B cell (primary cell): ENCODE measurements at regions of chr2 and their contacts with region 1.

Region 1: GRCh38 chr2:172710584-172711024 is 25.0 kb upstream of the RAPGEF4 start:
- DNase-seq: peak; percentile 23
- ATAC-seq: no peak
- H3K4me3 ChIP-seq: no peak overlapping the region
- H3K4me3 Mint-ChIP-seq: no peak overlapping the region
- H3K27ac ChIP-seq: no peak overlapping the region
- H3K27ac Mint-ChIP-seq: no peak overlapping the region
- H3K4me1 ChIP-seq: no peaks in the 10 kb centered on the region
- H3K4me1 Mint-ChIP-seq: no peaks in the 10 kb centered on the region
- H3K27me3 ChIP-seq: no peaks in the 10 kb centered on the region
- H3K27me3 Mint-ChIP-seq: peaks cover 8% of the 10 kb centered on the region
- CTCF ChIP-seq: peak; percentile 49

Region 2: GRCh38 chr2:171574149-171574795 is 1136.3 kb before region 1 on chr2:
- CTCF ChIA-PET with region 1: interaction called, 4 read pairs
- POLR2A ChIA-PET with region 1: no interaction called
- intact Hi-C with region 1: loop called (anchors 5 kb)
- DNase-seq: peak; percentile 87
- ATAC-seq: peak; percentile 100
- H3K4me3 ChIP-seq: peak overlapping the region in 1 of 5 experiments; percentile 5
- H3K4me3 Mint-ChIP-seq: peak overlapping the region; percentile 37
- H3K27ac ChIP-seq: no peak overlapping the region
- H3K27ac Mint-ChIP-seq: no peak overlapping the region
- H3K4me1 ChIP-seq: peaks cover 0 to 4% of the 10 kb centered on the region in 2 donors
- H3K4me1 Mint-ChIP-seq: peaks cover 6% of the 10 kb centered on the region
- H3K27me3 ChIP-seq: no peaks in the 10 kb centered on the region
- H3K27me3 Mint-ChIP-seq: peaks cover 8% of the 10 kb centered on the region
- CTCF ChIP-seq: peak; percentile 97

Region 3: DNA sequence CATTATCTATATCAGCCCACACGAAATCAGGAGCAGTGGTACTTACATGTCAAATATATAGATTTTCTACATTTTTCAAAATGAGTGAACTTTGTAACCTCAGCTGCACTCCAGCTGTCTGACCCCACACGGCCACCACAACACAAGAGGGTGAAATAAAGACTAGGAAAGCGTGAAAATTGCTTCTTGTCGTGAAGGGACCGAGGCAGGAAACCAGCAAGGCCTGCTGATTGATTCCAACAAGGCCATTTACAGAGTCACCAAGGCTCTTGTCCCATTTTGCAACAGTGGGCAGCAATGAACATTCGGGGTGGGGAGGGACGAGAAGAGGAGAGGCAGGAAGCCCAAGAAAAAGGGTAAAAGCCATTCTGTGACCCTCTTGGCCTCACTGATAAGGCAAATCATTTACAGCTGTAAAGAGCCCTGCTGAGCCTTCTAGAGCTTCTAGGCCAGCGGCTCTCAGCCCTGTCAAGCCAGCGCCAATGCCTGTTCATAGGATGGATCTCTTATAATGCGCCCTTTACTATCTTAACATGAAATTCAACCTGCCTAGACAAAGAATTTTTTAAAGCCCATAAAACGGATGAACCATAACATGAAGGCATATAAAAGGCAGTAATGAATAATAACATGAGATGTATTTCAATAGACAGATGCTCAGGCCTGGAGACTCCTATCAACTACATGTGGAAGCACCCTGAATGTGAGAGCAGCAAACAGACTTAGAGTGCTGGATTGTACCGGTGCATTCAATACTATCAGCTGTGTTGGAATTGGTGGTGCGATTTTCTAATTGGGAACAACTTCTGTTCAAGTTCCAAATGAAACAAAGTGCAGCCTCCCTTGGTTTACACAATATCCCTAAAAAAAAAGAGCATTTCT is 913.1 kb after region 1 on chr2:
- CTCF ChIA-PET with region 1: no interaction called
- POLR2A ChIA-PET with region 1: no interaction called
- intact Hi-C with region 1: no loop called
- DNase-seq: no peak
- ATAC-seq: no peak
- H3K4me3 ChIP-seq: no peak overlapping the region
- H3K4me3 Mint-ChIP-seq: no peak overlapping the region
- H3K27ac ChIP-seq: no peak overlapping the region
- H3K27ac Mint-ChIP-seq: no peak overlapping the region
- H3K4me1 ChIP-seq: no peaks in the 10 kb centered on the region
- H3K4me1 Mint-ChIP-seq: no peaks in the 10 kb centered on the region
- H3K27me3 ChIP-seq: peaks cover 0 to 6% (median 0%) of the 10 kb centered on the region in 4 experiments
- H3K27me3 Mint-ChIP-seq: peaks cover 47% of the 10 kb centered on the region
- CTCF ChIP-seq: no peak